Right ventricle myocardium inferior (tissue), 1 donor: ENCODE measurements at regions of chr22 and their contacts with region 1.

Region 1: DNA sequence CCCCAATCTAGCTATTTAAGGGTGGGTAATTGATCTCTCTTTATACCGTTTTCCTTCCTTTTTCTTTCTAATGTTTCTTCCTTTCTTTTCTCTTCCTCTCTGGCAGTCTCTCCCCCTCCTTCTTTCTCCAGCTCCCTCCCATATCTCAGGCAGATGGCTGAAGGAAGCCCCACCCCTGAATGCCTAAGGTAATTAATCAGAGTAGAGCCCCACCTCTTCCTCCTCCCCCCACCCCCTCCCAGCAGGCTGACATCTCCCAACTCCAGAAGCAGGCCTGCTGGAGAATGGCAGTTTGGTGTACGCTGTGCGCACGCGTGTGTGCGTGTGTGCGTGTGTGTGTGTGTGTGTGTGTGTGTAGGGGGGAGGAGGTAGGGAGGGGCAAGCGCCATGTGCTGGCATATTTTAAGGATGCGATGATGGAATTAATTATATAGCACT is 122.6 kb downstream of the APOL5 start:
- DNase-seq: peak; percentile 90
- ATAC-seq: peak; percentile 81

Region 2: GRCh38 chr22:35418088-35418487 is 422.2 kb before region 1 on chr22:
- intact Hi-C with region 1: no loop called
- DNase-seq: no peak
- ATAC-seq: no peak

Region 3: DNA sequence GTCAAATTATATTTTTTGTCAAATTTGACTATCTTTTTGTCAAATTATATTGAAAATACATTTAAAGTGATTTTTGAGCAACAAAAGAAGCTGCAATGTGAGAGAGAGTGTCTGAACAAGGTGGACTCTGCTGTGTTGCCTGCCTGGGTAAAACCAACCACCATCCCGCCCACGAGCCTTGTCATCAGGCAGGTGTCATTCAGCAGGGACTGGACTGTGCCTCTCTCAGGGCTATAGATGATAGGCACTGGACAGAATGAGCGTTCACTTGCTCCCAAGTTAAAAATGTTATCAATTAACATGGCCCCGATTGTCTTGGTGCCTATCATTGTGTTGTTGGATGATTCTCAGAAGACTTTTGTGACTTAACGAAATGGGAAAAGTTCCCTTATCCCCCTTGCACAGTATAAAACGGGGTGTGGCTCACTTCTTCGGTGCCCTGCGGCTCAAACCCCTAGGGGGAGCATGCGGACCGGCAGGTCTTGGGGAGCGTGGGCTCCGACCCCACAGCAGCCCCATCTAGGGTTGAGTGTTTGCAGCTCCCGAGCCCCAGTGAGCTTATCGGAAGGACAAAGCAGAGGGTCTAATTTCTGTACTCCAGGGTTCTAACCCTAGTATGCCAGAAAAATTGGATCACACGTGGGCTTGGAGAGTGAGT is 121.0 kb before region 1 on chr22:
- intact Hi-C with region 1: no loop called
- DNase-seq: no peak
- ATAC-seq: no peak

Region 4: GRCh38 chr22:35766654-35767580 is 73.4 kb before region 1 on chr22:
- intact Hi-C with region 1: loop called (anchors 5 kb)
- DNase-seq: no peak
- ATAC-seq: peak; percentile 60

Region 5: GRCh38 chr22:35894937-35895708 is 54.8 kb after region 1 on chr22:
- intact Hi-C with region 1: loop called (anchors 5 kb)
- DNase-seq: no peak
- ATAC-seq: peak; percentile 96